ENCODE measurements at regions of chr2 and their contacts with region 1.

Region 1: DNA sequence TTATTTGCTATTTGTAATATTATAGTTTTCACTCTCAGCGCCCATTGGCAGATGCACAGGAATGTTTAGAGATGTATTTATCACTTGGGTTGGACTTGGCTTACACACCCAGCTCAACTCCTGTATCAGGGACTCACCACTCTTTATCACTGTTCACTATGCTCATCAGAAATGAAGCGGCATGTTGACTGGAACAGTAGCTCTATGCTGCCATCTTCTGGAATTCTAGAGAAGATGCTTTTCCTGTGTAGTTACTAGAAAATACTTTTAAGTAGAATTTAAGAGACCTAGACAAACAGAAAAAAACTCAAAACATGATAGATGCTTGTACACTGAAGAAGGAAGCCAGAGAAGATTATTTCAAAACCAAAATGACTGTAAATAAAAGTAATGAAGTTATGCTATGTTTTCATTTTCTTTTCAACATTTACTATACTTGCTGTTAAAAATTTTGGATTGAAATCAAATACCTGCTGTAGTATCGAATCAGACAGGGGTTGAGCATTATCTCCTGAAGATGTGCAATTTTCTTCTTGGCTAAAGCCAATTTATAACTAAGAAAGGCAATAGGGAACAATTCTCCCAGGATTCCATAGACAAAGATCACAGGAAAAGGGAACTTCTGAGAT is 47.4 kb upstream of the NXPH2 start:
- DNase-seq: peak; percentile 46 to 60
- H3K4me3 ChIP-seq: no peak overlapping the region
- H3K4me3 Mint-ChIP-seq: no peak overlapping the region
- H3K27ac Mint-ChIP-seq: no peak overlapping the region
- H3K4me1 ChIP-seq: no peaks in the 10 kb centered on the region
- H3K4me1 Mint-ChIP-seq: no peaks in the 10 kb centered on the region
- H3K27me3 ChIP-seq: no peaks in the 10 kb centered on the region
- H3K27me3 Mint-ChIP-seq: peaks cover 4% of the 10 kb centered on the region
- CTCF ChIP-seq: peak; percentile 71 to 75

Region 2: DNA sequence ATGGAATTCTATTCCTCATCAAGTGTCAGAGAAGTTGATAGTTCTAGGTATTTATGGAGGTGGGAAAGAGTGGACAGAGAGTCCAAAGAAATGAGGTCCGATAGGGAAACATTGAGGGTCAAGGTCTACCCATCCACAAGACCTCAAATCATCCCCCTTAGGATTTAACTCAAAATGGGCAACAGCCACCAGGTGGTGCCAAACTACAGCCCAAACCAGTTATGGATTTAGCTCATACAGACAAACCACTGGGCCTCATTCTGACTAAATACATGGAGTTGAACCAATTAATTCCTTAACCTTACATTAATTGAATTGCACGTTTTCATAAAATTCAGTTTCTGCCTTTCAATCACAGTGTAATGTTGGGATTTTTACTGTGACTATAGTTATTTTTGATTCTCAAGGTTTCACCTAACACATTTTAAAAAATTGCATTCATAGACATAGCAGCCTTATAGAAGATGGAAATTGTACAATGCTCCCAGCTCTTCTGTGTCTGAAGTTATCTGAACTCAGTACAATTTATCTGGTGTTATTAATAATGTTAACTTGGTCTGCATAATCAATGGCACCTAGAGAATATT is 961.5 kb before region 1 on chr2:
- CTCF ChIA-PET with region 1: interaction called, 18 read pairs
- POLR2A ChIA-PET with region 1: no interaction called
- intact Hi-C with region 1: loop called (anchors 1 kb)
- DNase-seq: peak; percentile 73 to 79
- H3K4me3 ChIP-seq: no peak overlapping the region
- H3K4me3 Mint-ChIP-seq: no peak overlapping the region
- H3K27ac Mint-ChIP-seq: no peak overlapping the region
- H3K4me1 ChIP-seq: peaks cover 14% of the 10 kb centered on the region
- H3K4me1 Mint-ChIP-seq: no peaks in the 10 kb centered on the region
- H3K27me3 ChIP-seq: no peaks in the 10 kb centered on the region
- H3K27me3 Mint-ChIP-seq: no peaks in the 10 kb centered on the region
- CTCF ChIP-seq: peak; percentile 86 to 89

Region 3: GRCh38 chr2:137910641-137911040 is 916.9 kb before region 1 on chr2:
- CTCF ChIA-PET with region 1: interaction called, 11 read pairs
- POLR2A ChIA-PET with region 1: no interaction called
- intact Hi-C with region 1: loop called (anchors 1 kb)
- DNase-seq: peak in 1 of 2 experiments; percentile 26
- H3K4me3 ChIP-seq: no peak overlapping the region
- H3K4me3 Mint-ChIP-seq: no peak overlapping the region
- H3K27ac Mint-ChIP-seq: no peak overlapping the region
- H3K4me1 ChIP-seq: no peaks in the 10 kb centered on the region
- H3K4me1 Mint-ChIP-seq: peaks cover 14% of the 10 kb centered on the region
- H3K27me3 ChIP-seq: no peaks in the 10 kb centered on the region
- H3K27me3 Mint-ChIP-seq: no peaks in the 10 kb centered on the region
- CTCF ChIP-seq: peak; percentile 52 to 74

Region 4: DNA sequence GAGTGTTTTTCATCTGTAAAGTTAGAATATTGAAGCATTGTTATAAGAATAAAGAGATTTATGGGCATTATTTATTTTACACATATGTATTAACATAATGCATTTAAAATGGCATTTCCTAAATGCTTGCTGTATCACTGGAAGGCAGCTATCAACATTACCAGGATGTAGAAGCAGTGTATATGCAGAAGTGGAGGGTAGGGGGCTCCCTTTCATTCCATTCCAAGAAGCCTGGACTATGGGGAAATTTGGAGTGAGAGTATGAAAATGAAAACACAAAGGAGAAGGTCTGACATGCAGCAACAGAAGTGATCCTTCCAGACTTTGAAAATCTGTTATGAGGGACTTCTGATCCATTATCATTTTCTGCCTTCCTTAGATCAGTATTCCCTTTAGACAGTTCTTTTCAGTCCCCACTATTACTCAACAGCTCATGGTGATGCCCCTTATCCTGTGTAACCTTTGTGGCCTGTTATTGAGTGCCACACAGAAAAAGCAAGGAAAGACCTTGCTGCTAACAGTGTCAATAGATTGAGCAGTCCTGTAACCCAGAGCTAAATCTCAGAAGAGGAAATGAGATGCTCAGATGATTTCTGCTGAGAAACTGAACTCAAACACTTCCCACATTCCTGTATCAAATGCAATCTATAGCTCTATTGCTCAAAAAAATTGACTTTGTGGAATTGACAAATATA is 646.7 kb before region 1 on chr2:
- CTCF ChIA-PET with region 1: no interaction called
- POLR2A ChIA-PET with region 1: no interaction called
- intact Hi-C with region 1: loop called (anchors 5 kb)
- DNase-seq: peak in 1 of 2 experiments; percentile 28
- H3K4me3 ChIP-seq: no peak overlapping the region
- H3K4me3 Mint-ChIP-seq: no peak overlapping the region
- H3K27ac Mint-ChIP-seq: no peak overlapping the region
- H3K4me1 ChIP-seq: peaks cover 6% of the 10 kb centered on the region; the same call in 1 of the 2 replicates
- H3K4me1 Mint-ChIP-seq: peaks cover 21% of the 10 kb centered on the region
- H3K27me3 ChIP-seq: no peaks in the 10 kb centered on the region
- H3K27me3 Mint-ChIP-seq: no peaks in the 10 kb centered on the region
- CTCF ChIP-seq: peak; percentile 21 to 43

Region 5: DNA sequence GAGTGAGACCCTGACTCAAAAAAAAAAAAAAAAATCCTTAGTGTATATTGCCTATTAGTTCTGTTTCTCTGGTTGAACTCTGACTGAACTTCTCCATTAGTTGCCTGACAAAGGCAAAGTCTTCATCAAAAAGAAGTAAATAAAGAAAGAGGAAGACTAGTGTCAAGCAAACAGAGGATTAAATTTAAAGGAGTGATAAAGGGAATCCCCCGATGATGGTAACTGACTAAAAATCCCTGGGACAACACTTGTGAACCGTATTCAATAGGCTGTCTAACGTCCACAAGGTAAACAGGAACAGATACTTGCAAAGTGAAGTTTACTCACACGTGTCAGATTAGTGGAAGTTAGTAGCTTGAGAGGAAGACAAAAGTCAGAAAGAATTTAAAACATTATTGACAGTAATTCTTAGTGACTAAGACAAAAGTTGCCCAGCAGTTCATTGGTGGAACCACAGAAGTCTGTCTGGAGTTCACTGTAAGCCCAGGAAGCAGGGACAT is 352.2 kb before region 1 on chr2:
- CTCF ChIA-PET with region 1: interaction called, 3 read pairs
- POLR2A ChIA-PET with region 1: no interaction called
- intact Hi-C with region 1: loop called (anchors 1 kb)
- DNase-seq: no peak
- H3K4me3 ChIP-seq: no peak overlapping the region
- H3K4me3 Mint-ChIP-seq: no peak overlapping the region
- H3K27ac Mint-ChIP-seq: peak overlapping the region; percentile 17
- H3K4me1 ChIP-seq: peaks cover 6% of the 10 kb centered on the region; the same call in 1 of the 2 replicates
- H3K4me1 Mint-ChIP-seq: peaks cover 23% of the 10 kb centered on the region
- H3K27me3 ChIP-seq: no peaks in the 10 kb centered on the region
- H3K27me3 Mint-ChIP-seq: no peaks in the 10 kb centered on the region
- CTCF ChIP-seq: no peak

Region 6: GRCh38 chr2:138814120-138814898 is 13.2 kb before region 1 on chr2:
- CTCF ChIA-PET with region 1: interaction called, 21 read pairs
- POLR2A ChIA-PET with region 1: no interaction called
- intact Hi-C with region 1: loop called (anchors 1 kb)
- DNase-seq: peak in 1 of 2 experiments; percentile 36
- H3K4me3 ChIP-seq: no peak overlapping the region
- H3K4me3 Mint-ChIP-seq: no peak overlapping the region
- H3K27ac Mint-ChIP-seq: no peak overlapping the region
- H3K4me1 ChIP-seq: no peaks in the 10 kb centered on the region
- H3K4me1 Mint-ChIP-seq: peaks cover 6% of the 10 kb centered on the region
- H3K27me3 ChIP-seq: no peaks in the 10 kb centered on the region
- H3K27me3 Mint-ChIP-seq: no peaks in the 10 kb centered on the region
- CTCF ChIP-seq: peak; percentile 36 to 50

Region 7: GRCh38 chr2:138867341-138867740 is 39.8 kb after region 1 on chr2:
- CTCF ChIA-PET with region 1: no interaction called
- POLR2A ChIA-PET with region 1: no interaction called
- intact Hi-C with region 1: no loop called
- DNase-seq: no peak
- H3K4me3 ChIP-seq: no peak overlapping the region
- H3K4me3 Mint-ChIP-seq: no peak overlapping the region
- H3K27ac Mint-ChIP-seq: no peak overlapping the region
- H3K4me1 ChIP-seq: no peaks in the 10 kb centered on the region
- H3K4me1 Mint-ChIP-seq: no peaks in the 10 kb centered on the region
- H3K27me3 ChIP-seq: no peaks in the 10 kb centered on the region
- H3K27me3 Mint-ChIP-seq: peaks cover 3% of the 10 kb centered on the region
- CTCF ChIP-seq: no peak

Region 8: DNA sequence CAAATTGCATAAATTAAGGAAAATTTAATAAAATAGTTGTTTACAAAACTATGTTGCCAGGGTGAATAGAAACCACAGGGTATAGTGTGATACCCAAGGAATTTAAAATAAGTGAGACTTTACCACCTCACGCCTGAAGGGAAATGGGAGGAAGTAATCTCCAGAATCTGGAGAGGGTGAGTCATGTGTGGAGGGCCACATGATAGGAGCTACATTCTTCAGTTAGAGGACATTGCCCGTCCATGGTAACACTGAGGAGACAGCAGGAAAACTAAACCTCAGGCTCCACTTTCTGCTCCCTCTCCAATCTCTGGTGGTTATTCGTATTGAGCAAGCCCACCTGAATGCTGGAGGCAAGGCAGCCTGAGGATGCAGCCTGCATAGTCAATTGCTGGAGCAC is 49.9 kb after region 1 on chr2:
- CTCF ChIA-PET with region 1: no interaction called
- POLR2A ChIA-PET with region 1: no interaction called
- intact Hi-C with region 1: no loop called
- DNase-seq: no peak
- H3K4me3 ChIP-seq: no peak overlapping the region
- H3K4me3 Mint-ChIP-seq: no peak overlapping the region
- H3K27ac Mint-ChIP-seq: no peak overlapping the region
- H3K4me1 ChIP-seq: no peaks in the 10 kb centered on the region
- H3K4me1 Mint-ChIP-seq: no peaks in the 10 kb centered on the region
- H3K27me3 ChIP-seq: no peaks in the 10 kb centered on the region
- H3K27me3 Mint-ChIP-seq: peaks cover 13% of the 10 kb centered on the region
- CTCF ChIP-seq: no peak